Activated CD4-positive, alpha-beta T cell treated with anti-CD3 and anti-CD28 coated beads, Interleukin-2, amount 10 ng/mL, durations not matched to agents 24 days and 14 days (primary cell): ENCODE measurements at regions of chrX and their contacts with region 1.

Region 1: DNA sequence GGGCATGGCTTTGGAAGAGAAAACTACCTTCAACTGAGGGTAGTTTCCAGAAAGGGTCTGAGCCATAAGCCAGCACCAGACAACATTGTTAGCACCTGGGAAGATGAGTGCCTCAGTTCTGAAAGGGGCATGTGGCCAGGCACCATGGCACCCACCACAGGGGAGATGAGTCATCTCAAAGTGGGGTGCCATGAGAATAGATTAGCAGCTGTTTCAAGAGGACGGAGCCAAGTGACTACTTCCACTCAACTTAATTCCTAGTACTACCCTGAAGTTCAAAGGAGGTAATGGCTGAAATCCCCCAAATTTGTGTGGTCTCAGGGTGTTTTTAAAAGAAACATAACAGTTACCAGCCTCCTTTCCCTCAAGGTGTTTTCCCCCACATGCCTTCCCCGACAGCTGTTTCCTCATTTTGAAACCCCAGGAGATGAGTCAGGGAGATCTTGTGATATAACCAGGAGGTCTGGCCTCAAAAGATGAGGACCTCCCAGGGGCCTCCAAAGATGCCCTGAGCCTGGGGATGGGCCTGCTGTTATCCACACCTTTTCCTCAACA is 27.8 kb upstream of the FTHL17 start:
- DNase-seq: peak; percentile 79
- H3K4me3 Mint-ChIP-seq: no peak overlapping the region
- H3K27ac Mint-ChIP-seq: peak overlapping the region; percentile 79
- H3K4me1 Mint-ChIP-seq: peaks cover 12% of the 10 kb centered on the region
- H3K27me3 Mint-ChIP-seq: no peaks in the 10 kb centered on the region

Region 2: GRCh38 chrX:30652527-30653414 is 446.8 kb before region 1 on chrX:
- intact Hi-C with region 1: loop called (anchors 10 kb)
- DNase-seq: peak; percentile 97
- H3K4me3 Mint-ChIP-seq: peak overlapping the region; percentile 92
- H3K27ac Mint-ChIP-seq: peak overlapping the region; percentile 99
- H3K4me1 Mint-ChIP-seq: peaks cover 33% of the 10 kb centered on the region
- H3K27me3 Mint-ChIP-seq: no peaks in the 10 kb centered on the region

Region 3: GRCh38 chrX:31061091-31061490 is 38.5 kb before region 1 on chrX:
- intact Hi-C with region 1: loop called (anchors 1 kb)
- DNase-seq: no peak
- H3K4me3 Mint-ChIP-seq: no peak overlapping the region
- H3K27ac Mint-ChIP-seq: no peak overlapping the region
- H3K4me1 Mint-ChIP-seq: peaks cover 10% of the 10 kb centered on the region
- H3K27me3 Mint-ChIP-seq: no peaks in the 10 kb centered on the region

Region 4: DNA sequence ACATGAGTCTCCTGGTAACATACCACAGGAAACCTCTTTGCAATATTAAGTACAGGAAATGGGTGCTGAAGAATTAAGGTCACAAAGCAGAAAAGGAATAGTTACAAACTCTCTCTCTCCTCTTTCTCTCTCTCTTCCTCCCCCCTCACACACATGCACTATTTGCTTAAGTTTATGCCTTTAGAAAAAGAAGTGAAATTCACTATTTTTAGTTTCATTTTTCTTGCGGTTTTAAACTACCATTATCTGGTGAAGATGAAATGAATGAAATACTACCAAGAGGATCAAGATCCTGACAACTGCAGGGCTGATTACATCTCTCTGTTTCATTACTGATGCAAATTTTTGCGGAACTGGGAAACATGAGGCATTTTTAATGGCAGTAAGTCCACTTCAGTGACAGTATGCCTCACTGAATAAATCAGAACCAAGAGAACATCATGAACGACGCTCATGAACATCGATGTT is 36.6 kb after region 1 on chrX:
- intact Hi-C with region 1: loop called (anchors 1 kb)
- DNase-seq: no peak
- H3K4me3 Mint-ChIP-seq: peak overlapping the region; percentile 56
- H3K27ac Mint-ChIP-seq: peak overlapping the region; percentile 51
- H3K4me1 Mint-ChIP-seq: peaks cover 12% of the 10 kb centered on the region
- H3K27me3 Mint-ChIP-seq: no peaks in the 10 kb centered on the region

Region 5: GRCh38 chrX:31931225-31931624 is 831.6 kb after region 1 on chrX:
- intact Hi-C with region 1: no loop called
- DNase-seq: no peak
- H3K4me3 Mint-ChIP-seq: no peak overlapping the region
- H3K27ac Mint-ChIP-seq: no peak overlapping the region
- H3K4me1 Mint-ChIP-seq: no peaks in the 10 kb centered on the region
- H3K27me3 Mint-ChIP-seq: no peaks in the 10 kb centered on the region